Activated CD8-positive, alpha-beta T cell treated with anti-CD3 and anti-CD28 coated beads, Interleukin-2, amount 10 ng/mL, durations not matched to agents 7 days and 5 days (primary cell): ENCODE measurements at regions of chr2 and their contacts with region 1.

Region 1: DNA sequence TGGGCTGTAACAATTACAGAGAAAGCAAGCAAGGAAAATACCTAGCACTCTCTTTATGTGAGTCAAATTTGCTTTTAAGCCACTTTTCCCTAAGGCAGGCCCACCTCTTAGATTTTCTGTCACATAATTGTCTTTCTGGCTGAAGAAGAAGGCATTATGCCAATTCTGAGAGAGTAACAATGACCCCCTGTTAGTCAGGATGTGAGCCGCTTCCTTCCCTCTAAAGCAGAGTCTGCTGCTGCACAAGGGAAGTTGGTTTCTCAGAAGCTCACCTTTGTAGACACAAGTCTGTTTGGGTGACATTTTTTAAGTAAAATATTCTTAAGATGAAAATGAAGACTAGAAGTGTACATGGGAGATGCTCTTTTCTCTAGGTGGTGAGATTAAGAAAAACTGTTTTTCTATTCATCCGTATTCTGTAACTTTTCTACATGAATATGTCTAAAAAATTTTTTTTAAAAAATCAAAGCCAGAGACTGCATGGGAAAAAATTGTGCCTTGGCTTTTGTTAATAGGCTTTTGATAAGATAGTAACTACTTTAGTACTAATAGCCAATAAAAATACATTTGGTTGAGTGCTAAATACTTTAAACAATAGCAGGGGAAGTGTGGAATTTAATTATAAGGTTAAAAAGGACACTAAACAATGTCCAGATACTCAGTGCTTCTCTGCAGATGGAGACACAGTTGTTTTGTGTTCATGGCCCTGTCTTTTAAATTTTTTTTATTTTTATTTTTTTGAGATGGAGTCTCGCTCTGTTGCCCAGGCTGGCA is 33.4 kb upstream of the VPS54 start:
- DNase-seq: peak; percentile 35
- ATAC-seq: peak; percentile 35
- H3K4me3 Mint-ChIP-seq: no peak overlapping the region
- H3K27ac Mint-ChIP-seq: no peak overlapping the region
- H3K4me1 Mint-ChIP-seq: peaks cover 40% of the 10 kb centered on the region
- H3K27me3 Mint-ChIP-seq: no peaks in the 10 kb centered on the region

Region 2: DNA sequence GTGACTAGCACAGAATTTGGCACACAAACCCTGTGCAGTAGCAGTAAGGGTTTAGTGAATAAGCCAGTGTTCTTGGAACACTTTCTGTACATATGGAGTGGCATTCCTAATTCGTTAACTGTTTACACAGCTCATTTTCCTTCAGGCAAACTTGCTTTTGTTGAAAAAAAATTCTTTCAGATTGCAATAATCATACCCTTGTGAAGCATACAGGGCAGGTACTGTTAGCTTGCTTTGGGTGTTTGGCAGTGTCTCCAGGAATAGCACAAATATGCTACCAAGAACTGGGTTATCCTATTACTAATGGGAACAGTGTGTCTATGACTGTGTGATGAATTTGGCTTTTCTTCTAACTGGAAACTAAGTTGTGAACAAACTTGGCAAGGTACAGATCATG is 177.5 kb before region 1 on chr2:
- CTCF ChIA-PET with region 1: no interaction called
- POLR2A ChIA-PET with region 1: no interaction called
- DNase-seq: no peak
- ATAC-seq: no peak
- H3K4me3 Mint-ChIP-seq: no peak overlapping the region
- H3K27ac Mint-ChIP-seq: peak overlapping the region; percentile 5
- H3K4me1 Mint-ChIP-seq: peaks cover 18% of the 10 kb centered on the region
- H3K27me3 Mint-ChIP-seq: no peaks in the 10 kb centered on the region

Region 3: DNA sequence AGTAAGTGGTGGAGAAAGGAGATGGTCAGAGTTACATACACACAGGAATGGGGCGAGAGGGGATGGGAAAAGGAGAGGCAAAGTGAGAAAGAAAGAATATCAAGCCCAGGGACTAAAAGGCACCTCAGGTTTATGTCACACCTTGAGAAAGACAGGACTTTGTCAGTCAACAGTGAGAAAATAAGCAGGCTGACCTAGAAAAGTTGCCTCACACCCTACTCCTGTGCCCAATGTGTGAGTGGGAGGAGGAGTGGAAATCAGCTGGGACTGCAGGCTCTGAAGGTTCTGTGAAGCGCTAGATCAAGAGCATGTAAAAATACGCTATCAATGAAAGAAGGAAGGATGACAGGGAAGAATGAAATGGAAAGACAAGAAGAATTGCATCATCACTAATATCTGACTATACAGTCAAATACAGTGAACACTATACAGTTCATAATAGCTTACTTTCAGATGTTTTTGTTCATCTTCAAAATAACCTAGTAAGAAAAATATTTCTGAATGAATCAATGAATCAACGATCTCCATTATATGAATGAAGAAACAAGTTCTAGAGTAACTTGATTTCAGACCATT is 44.1 kb before region 1 on chr2:
- CTCF ChIA-PET with region 1: no interaction called
- POLR2A ChIA-PET with region 1: no interaction called
- DNase-seq: no peak
- ATAC-seq: no peak
- H3K4me3 Mint-ChIP-seq: no peak overlapping the region
- H3K27ac Mint-ChIP-seq: no peak overlapping the region
- H3K4me1 Mint-ChIP-seq: peaks cover 4% of the 10 kb centered on the region
- H3K27me3 Mint-ChIP-seq: no peaks in the 10 kb centered on the region

Region 4: DNA sequence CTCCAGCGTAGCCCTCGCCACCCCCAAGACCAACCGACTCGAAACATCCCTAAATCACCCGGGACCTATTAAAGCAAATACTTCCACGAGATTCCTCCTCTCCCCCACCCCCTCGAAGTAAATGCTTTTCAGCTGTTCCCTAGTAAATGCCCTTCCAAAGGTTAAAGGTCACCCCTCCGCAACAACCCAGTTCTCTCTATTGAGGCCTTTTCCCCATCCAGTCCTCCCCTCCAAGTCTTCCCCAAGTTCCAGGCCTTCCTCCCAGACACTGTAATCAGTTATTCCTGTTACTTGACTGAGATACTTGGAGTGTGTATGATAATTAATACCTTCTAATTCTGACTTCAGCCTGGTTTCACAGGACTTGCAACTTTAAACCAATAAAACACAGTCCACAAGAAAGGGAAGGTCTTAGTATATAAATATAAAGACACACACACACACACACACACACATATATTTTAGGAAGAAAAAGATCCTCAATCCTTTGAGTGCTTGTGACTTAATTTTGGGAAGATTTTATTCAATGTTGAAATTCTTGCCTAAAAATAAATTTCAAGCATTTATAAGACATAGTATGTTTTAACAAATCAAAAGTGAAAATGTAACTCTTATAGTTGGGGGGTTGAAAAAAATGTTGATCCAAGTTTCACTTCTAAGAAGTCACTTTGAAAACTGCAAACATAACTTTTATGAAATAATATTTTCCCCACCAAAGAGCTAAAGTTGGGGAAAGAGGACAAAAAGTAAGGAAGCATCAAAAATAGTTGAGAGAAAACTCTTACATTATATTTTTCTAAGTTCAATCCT is 32.7 kb before region 1 on chr2:
- CTCF ChIA-PET with region 1: interaction called, 29 read pairs
- POLR2A ChIA-PET with region 1: interaction called, 3 read pairs
- DNase-seq: no peak
- ATAC-seq: peak; percentile 7
- H3K4me3 Mint-ChIP-seq: peak overlapping the region; percentile 77
- H3K27ac Mint-ChIP-seq: peak overlapping the region; percentile 93
- H3K4me1 Mint-ChIP-seq: peaks cover 39% of the 10 kb centered on the region
- H3K27me3 Mint-ChIP-seq: no peaks in the 10 kb centered on the region

Region 5: GRCh38 chr2:64101141-64101591 is 48.5 kb after region 1 on chr2:
- CTCF ChIA-PET with region 1: interaction called, 11 read pairs
- POLR2A ChIA-PET with region 1: no interaction called
- DNase-seq: no peak
- ATAC-seq: peak; percentile 62
- H3K4me3 Mint-ChIP-seq: no peak overlapping the region
- H3K27ac Mint-ChIP-seq: peak overlapping the region; percentile 62
- H3K4me1 Mint-ChIP-seq: peaks cover 9% of the 10 kb centered on the region
- H3K27me3 Mint-ChIP-seq: no peaks in the 10 kb centered on the region

Region 6: DNA sequence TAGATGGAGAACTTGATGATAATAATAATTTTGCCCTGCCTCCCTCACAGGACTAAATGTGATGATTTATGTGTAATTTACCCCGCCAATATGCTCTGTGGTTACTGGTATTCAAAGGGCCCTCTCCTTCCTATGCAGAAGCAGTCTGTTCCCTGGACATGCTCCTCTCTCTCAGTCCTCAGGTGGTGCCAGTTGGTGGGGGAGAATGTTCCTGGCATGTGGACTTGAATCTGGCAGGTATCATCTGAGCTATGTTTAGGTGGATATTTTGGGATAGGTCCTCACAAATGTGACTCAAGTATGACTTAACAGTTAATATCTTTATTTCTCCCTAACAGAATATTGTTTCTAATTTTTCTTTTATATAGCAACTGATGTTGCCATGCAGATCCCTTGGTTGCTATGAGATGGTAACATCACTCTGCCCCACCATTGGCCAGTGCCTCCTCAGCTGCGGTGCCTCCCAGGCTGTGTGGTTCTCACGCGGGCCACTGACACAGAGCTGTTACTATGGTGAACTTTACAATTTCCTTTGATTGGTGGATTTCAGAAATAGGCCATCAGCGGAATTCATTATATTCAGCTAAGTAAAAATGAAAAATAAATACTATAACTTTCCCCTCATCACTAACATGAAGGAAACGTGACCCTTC is 198.2 kb after region 1 on chr2:
- CTCF ChIA-PET with region 1: no interaction called
- POLR2A ChIA-PET with region 1: no interaction called
- DNase-seq: no peak
- ATAC-seq: no peak
- H3K4me3 Mint-ChIP-seq: no peak overlapping the region
- H3K27ac Mint-ChIP-seq: no peak overlapping the region
- H3K4me1 Mint-ChIP-seq: no peaks in the 10 kb centered on the region
- H3K27me3 Mint-ChIP-seq: no peaks in the 10 kb centered on the region

Region 7: GRCh38 chr2:64318476-64318748 is 265.8 kb after region 1 on chr2:
- CTCF ChIA-PET with region 1: interaction called, 10 read pairs
- POLR2A ChIA-PET with region 1: no interaction called
- DNase-seq: no peak
- ATAC-seq: no peak
- H3K4me3 Mint-ChIP-seq: no peak overlapping the region
- H3K27ac Mint-ChIP-seq: no peak overlapping the region
- H3K4me1 Mint-ChIP-seq: peaks cover 6% of the 10 kb centered on the region
- H3K27me3 Mint-ChIP-seq: peaks cover 22% of the 10 kb centered on the region